ENCODE measurements at regions of chr16 and their contacts with region 1.

Region 1: GRCh38 chr16:15949210-15950160 is at the start of gene ABCC1:
- DNase-seq: no peak
- H3K4me3 ChIP-seq: peak within 1 kb of the TSS; percentile 77 to 93
- H3K27ac ChIP-seq: peak within 1 kb of the TSS; percentile 91
- H3K4me1 ChIP-seq: peaks cover 45% of the 10 kb centered on the region
- H3K27me3 ChIP-seq: no peaks in the 10 kb centered on the region
- CTCF ChIP-seq: no peak
- POLR2A ChIP-seq: no peak
- total RNA-seq, gene ABCC1: 47.9 TPM

Region 2: DNA sequence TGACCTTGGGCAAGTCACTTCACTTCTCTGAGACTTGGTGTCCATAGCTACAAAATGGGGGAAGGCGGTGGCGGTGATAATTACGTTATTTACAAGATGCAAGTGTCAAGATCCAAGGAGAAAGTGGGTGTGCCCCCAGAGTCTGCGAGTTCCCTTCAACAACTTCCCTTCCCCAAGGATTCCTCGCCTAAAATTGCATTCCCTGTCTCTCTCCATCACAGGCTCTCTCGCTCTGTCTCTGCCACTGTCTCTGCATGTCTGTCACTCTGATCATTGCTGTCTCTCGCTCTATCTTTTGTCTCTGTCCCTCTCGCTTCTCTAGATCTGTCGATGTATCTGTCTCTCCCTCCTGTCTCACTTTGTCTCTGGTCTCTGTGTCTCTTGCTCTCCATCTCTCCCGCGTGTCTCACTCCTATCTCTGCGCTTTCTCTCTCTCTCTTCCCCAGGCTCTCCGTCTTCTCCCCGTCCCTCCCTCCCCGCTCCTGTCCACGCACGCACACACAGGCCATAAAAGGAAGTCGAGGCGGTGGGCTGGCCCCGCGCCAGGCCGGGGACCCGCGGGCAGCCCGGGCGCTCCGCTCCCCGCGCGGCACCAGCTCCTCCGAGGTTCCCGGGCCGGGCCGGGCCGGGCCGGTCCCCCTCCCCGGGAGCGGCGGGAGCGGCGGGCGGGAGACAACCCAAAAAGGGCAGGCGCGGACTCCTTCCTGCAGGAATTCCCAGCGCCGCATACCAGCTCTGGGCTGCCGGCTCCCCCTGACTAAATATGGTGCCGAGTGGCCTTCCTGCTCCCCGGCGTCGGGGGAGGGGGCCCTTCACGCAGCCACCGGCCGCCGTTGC is 91.5 kb before region 1 on chr16:
- intact Hi-C with region 1: loop called (anchors 5 kb)
- DNase-seq: no peak
- H3K4me3 ChIP-seq: peak overlapping the region; percentile 36 to 48
- H3K27ac ChIP-seq: peak overlapping the region; percentile 69
- H3K4me1 ChIP-seq: peaks cover 22% of the 10 kb centered on the region
- H3K27me3 ChIP-seq: no peaks in the 10 kb centered on the region
- CTCF ChIP-seq: no peak
- POLR2A ChIP-seq: no peak

Region 3: GRCh38 chr16:16021988-16022682 is 72.7 kb after region 1 on chr16:
- intact Hi-C with region 1: loop called (anchors 5 kb)
- DNase-seq: peak in 1 of 2 donors; percentile 94
- H3K4me3 ChIP-seq: no peak overlapping the region
- H3K27ac ChIP-seq: peak overlapping the region; percentile 82
- H3K4me1 ChIP-seq: peaks cover 45% of the 10 kb centered on the region
- H3K27me3 ChIP-seq: no peaks in the 10 kb centered on the region
- CTCF ChIP-seq: no peak
- POLR2A ChIP-seq: no peak